ENCODE measurements at regions of chr5 and their contacts with region 1.

Region 1: GRCh38 chr5:92309336-92309991 is 926.3 kb upstream of the ARRDC3 start:
- DNase-seq: no peak
- ATAC-seq: no peak
- H3K4me3 ChIP-seq: no peak overlapping the region
- H3K4me3 Mint-ChIP-seq: no peak overlapping the region
- H3K27ac ChIP-seq: no peak overlapping the region
- H3K27ac Mint-ChIP-seq: no peak overlapping the region
- H3K4me1 ChIP-seq: no peaks in the 10 kb centered on the region
- H3K4me1 Mint-ChIP-seq: no peaks in the 10 kb centered on the region
- H3K27me3 ChIP-seq: no peaks in the 10 kb centered on the region
- H3K27me3 Mint-ChIP-seq: no peaks in the 10 kb centered on the region
- CTCF ChIP-seq: no peak

Region 2: GRCh38 chr5:92267830-92268742 is 41.4 kb before region 1 on chr5:
- CTCF ChIA-PET with region 1: no interaction called
- POLR2A ChIA-PET with region 1: no interaction called
- intact Hi-C with region 1: no loop called
- DNase-seq: no peak
- ATAC-seq: no peak
- H3K4me3 ChIP-seq: no peak overlapping the region
- H3K4me3 Mint-ChIP-seq: no peak overlapping the region
- H3K27ac ChIP-seq: no peak overlapping the region
- H3K27ac Mint-ChIP-seq: no peak overlapping the region
- H3K4me1 ChIP-seq: no peaks in the 10 kb centered on the region
- H3K4me1 Mint-ChIP-seq: no peaks in the 10 kb centered on the region
- H3K27me3 ChIP-seq: no peaks in the 10 kb centered on the region
- H3K27me3 Mint-ChIP-seq: no peaks in the 10 kb centered on the region
- CTCF ChIP-seq: no peak

Region 3: DNA sequence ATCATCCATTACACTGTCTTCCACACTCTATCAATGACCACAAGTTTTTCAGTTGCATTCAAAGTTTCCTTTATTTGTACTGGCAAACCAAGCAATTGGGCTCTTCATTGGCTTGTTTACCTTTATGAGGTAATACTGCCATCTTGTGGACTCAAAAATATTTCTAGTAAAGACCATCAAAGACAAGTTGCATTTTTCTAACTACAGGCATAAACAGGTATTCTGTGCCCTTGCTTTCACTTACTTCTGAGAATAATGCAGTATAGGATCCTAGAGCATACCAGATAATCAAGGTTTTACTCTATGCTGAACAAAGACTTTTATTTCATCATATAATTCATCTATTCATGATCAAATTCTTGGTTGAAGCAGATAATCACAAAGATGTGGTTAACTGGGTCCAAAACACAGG is 1605.7 kb after region 1 on chr5:
- CTCF ChIA-PET with region 1: no interaction called
- POLR2A ChIA-PET with region 1: no interaction called
- intact Hi-C with region 1: loop called (anchors 5 kb)
- DNase-seq: peak; percentile 51
- ATAC-seq: peak; percentile 14
- H3K4me3 ChIP-seq: no peak overlapping the region
- H3K4me3 Mint-ChIP-seq: no peak overlapping the region
- H3K27ac ChIP-seq: no peak overlapping the region
- H3K27ac Mint-ChIP-seq: no peak overlapping the region
- H3K4me1 ChIP-seq: no peaks in the 10 kb centered on the region
- H3K4me1 Mint-ChIP-seq: no peaks in the 10 kb centered on the region
- H3K27me3 ChIP-seq: no peaks in the 10 kb centered on the region
- H3K27me3 Mint-ChIP-seq: no peaks in the 10 kb centered on the region
- CTCF ChIP-seq: peak; percentile 84

Measured in B cell (primary cell).